ENCODE measurements at regions of chr10 and their contacts with region 1.

Region 1: DNA sequence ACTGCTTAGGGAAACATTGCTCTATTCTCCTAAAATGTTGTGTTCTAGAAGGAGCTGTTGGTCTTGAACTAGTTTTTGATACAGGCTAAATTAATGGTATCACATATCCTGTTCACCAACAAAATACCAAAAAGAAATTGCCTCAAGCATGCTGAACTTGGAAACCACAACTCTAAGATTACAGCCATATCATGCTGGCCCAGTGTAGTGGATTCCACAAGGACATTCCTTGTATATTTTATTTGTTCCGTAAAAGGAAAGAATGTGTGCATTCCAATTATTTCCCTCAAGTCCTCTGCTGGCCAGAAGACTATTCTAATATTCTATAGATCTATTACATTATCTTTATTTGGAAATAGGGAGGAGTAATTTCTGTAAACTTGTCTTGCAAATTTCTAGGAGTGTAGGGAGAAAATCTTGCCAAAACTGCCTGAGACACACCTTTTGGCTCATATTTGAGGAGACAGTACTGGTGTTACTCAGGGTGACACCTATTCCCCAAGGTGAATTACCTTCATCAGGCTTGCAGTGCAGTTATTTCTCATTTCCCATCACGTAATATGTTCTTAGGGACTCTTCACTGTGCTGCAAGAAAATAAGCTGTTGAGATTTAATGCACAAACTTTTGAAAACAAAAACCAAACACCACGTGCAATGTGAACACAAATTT is 1.9 kb upstream of the NEBL start:
- DNase-seq: no peak
- ATAC-seq: no peak
- H3K4me3 ChIP-seq: no peak overlapping the region
- H3K27ac ChIP-seq: no peak overlapping the region
- H3K4me1 ChIP-seq: no peaks in the 10 kb centered on the region
- H3K27me3 ChIP-seq: no peaks in the 10 kb centered on the region

Region 2: GRCh38 chr10:21069929-21070700 is 171.1 kb after region 1 on chr10:
- intact Hi-C with region 1: loop called in 1 of 4 experiments (anchors 5 kb)
- DNase-seq: peak in 1 of 3 donors; percentile 51
- ATAC-seq: peak; percentile 48 to 68
- H3K4me3 ChIP-seq: no peak overlapping the region
- H3K27ac ChIP-seq: peak overlapping the region; percentile 58
- H3K4me1 ChIP-seq: peaks cover 6% of the 10 kb centered on the region
- H3K27me3 ChIP-seq: no peaks in the 10 kb centered on the region

Region 3: DNA sequence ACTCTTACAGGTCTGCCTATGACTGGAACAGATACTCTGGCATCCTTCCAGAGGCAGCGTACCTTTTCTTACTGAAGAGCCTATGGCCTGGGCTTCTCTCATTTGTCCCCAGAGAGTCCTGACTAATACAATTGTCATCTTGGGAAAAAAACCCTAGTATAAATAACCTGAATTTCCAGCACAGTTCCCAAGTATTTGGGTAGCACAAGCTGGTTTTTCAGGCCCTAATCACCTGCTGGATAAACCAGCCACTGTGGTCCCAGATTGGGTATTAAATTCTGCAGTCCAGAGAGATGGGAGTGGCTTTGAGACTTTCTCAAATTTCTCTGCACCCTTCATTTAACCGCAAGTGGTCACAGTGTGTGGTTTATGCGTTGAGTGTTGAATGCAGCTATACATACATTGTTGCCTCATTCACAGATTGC is 184.9 kb after region 1 on chr10:
- intact Hi-C with region 1: no loop called
- DNase-seq: no peak
- ATAC-seq: no peak
- H3K4me3 ChIP-seq: no peak overlapping the region
- H3K27ac ChIP-seq: no peak overlapping the region
- H3K4me1 ChIP-seq: no peaks in the 10 kb centered on the region
- H3K27me3 ChIP-seq: no peaks in the 10 kb centered on the region